ENCODE measurements at regions of chr5 and their contacts with region 1.

Region 1: GRCh38 chr5:179623003-179623880 is at the start of gene HNRNPH1:
- DNase-seq: peak; percentile 98 to 99
- H3K4me3 ChIP-seq: peak within 1 kb of the TSS; percentile 99 to 100 (median 100)
- H3K27ac ChIP-seq: peak within 1 kb of the TSS; percentile 100
- H3K4me1 ChIP-seq: peaks cover 28 to 41% of the 10 kb centered on the region in 2 donors
- H3K27me3 ChIP-seq: no peaks in the 10 kb centered on the region
- CTCF ChIP-seq: no peak
- POLR2A ChIP-seq: peak; percentile 99 to 100
- total RNA-seq, gene HNRNPH1: 459 to 991 (median 620) TPM

Region 2: GRCh38 chr5:179559284-179560252 is 63.7 kb before region 1 on chr5:
- intact Hi-C with region 1: loop called (anchors 5 kb)
- DNase-seq: peak; percentile 99 to 100
- H3K4me3 ChIP-seq: peak overlapping the region; percentile 41 to 69 (median 61)
- H3K27ac ChIP-seq: peak overlapping the region; percentile 48 to 69 (median 59)
- H3K4me1 ChIP-seq: peaks cover 4 to 9% of the 10 kb centered on the region in 2 donors
- H3K27me3 ChIP-seq: no peaks in the 10 kb centered on the region
- CTCF ChIP-seq: no peak
- POLR2A ChIP-seq: peak; percentile 20 to 98

Region 3: GRCh38 chr5:179577286-179577960 is 45.8 kb before region 1 on chr5:
- intact Hi-C with region 1: no loop called
- DNase-seq: no peak
- H3K4me3 ChIP-seq: no peak overlapping the region
- H3K27ac ChIP-seq: no peak overlapping the region
- H3K4me1 ChIP-seq: no peaks in the 10 kb centered on the region
- H3K27me3 ChIP-seq: no peaks in the 10 kb centered on the region
- CTCF ChIP-seq: no peak
- POLR2A ChIP-seq: no peak

Region 4: DNA sequence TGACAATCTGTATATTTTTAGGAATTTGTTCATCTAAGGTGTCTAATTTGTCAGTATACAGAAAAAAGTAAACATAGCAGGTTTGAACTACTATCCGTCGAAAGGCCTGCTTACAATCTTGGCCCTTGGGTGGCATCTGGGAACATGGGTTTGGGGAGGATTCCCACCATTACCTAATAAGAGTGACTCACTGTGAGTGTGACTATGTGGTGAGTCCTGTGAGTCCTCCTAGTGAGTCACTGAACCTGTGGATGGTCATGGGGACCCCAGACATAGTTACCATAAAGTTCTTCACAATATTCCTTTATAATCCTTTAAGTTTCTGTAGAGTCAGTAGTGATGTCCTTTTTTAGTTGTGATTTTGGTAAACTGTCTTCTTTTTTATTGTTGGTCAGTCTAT is 411.3 kb after region 1 on chr5:
- intact Hi-C with region 1: no loop called
- DNase-seq: no peak
- H3K4me3 ChIP-seq: no peak overlapping the region
- H3K27ac ChIP-seq: no peak overlapping the region
- H3K4me1 ChIP-seq: no peaks in the 10 kb centered on the region
- H3K27me3 ChIP-seq: no peaks in the 10 kb centered on the region
- CTCF ChIP-seq: no peak
- POLR2A ChIP-seq: no peak